ENCODE measurements at regions of chr4 and their contacts with region 1.

Region 1: GRCh38 chr4:76459291-76459723 is 24.3 kb downstream of the SHROOM3 start:
- DNase-seq: peak in 1 of 2 experiments; percentile 88
- H3K4me3 ChIP-seq: peak overlapping the region in 2 of 4 experiments; percentile 16 to 23; a peak in 2 of 8 replicates
- H3K27ac ChIP-seq: peak overlapping the region; percentile 77
- H3K4me1 ChIP-seq: peaks cover 3 to 10% (median 9%) of the 10 kb centered on the region in 4 experiments; a peak in 5 of 7 replicates
- H3K27me3 ChIP-seq: no peaks in the 10 kb centered on the region
- CTCF ChIP-seq: no peak
- EP300 ChIP-seq: no peak
- POLR2A ChIP-seq: peak in 1 of 2 experiments; percentile 73; a peak in 2 of 3 replicates
- RAD21 ChIP-seq: 0 out of 4 replicates have a peak, but pooled peaks of 1 of the 2 experiments have one; percentile 7

Region 2: GRCh38 chr4:76470064-76470463 is 10.8 kb after region 1 on chr4:
- CTCF ChIA-PET with region 1: no interaction called
- POLR2A ChIA-PET with region 1: interaction called, 11 read pairs
- DNase-seq: no peak
- H3K4me3 ChIP-seq: no peak overlapping the region
- H3K27ac ChIP-seq: no peak overlapping the region
- H3K4me1 ChIP-seq: 0 out of 7 replicates have a peak, but pooled peaks cover 0 to 2% (median 0%) of the 10 kb centered on the region in 4 experiments
- H3K27me3 ChIP-seq: no peaks in the 10 kb centered on the region
- CTCF ChIP-seq: no peak
- EP300 ChIP-seq: no peak
- POLR2A ChIP-seq: no peak
- RAD21 ChIP-seq: no peak

Region 3: DNA sequence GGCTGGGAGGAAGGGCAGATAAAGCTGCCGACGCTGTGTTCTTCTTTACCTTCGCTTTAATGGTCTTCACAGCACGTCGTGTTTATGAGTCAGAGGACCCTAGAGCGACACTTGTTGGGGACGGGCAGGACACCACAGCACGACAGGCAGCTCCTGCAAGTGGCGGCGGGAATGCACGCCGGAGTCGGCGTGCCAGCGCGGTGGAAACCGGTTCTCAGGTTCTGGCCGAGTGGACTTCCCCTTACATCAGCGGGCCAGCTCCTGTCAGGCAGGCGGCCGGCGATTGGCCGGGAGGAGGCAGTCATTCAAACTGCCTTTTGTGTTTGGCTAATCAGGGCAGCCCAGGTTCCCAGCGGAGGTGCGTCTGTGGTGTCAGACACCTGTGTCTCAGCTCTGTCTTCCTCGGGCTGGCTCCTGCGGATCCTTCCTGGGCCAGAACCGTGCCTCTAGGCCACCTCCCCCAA is 126.6 kb after region 1 on chr4:
- CTCF ChIA-PET with region 1: no interaction called
- POLR2A ChIA-PET with region 1: no interaction called
- DNase-seq: peak; percentile 64 to 87
- H3K4me3 ChIP-seq: peak overlapping the region; percentile 24 to 55 (median 35); a peak in 7 of 8 replicates
- H3K27ac ChIP-seq: peak overlapping the region; percentile 12; the same call in 1 of the 2 replicates
- H3K4me1 ChIP-seq: peaks cover 11 to 21% (median 18%) of the 10 kb centered on the region in 4 experiments
- H3K27me3 ChIP-seq: no peaks in the 10 kb centered on the region
- CTCF ChIP-seq: peak; percentile 16 to 50 (median 46); a peak in 3 of 4 replicates
- EP300 ChIP-seq: 0 out of 3 replicates have a peak, but pooled peaks of 1 of the 2 experiments have one; percentile 55
- POLR2A ChIP-seq: peak in 1 of 2 experiments; percentile 65; a peak in 2 of 3 replicates
- RAD21 ChIP-seq: peak; percentile 18 to 54; a peak in 3 of 4 replicates

Measured in H1 (cell line).